ENCODE measurements at regions of chrX and their contacts with region 1.

Region 1: GRCh38 chrX:100768679-100769338 is 36.9 kb upstream of the SYTL4 start:
- DNase-seq: peak; percentile 34
- ATAC-seq: peak; percentile 77
- H3K4me3 ChIP-seq: no peak overlapping the region
- H3K27ac ChIP-seq: no peak overlapping the region
- H3K4me1 ChIP-seq: no peaks in the 10 kb centered on the region
- H3K27me3 ChIP-seq: no peaks in the 10 kb centered on the region
- CTCF ChIP-seq: peak; percentile 100; a peak in 5 of 6 replicates
- EP300 ChIP-seq: no peak
- POLR2A ChIP-seq: no peak
- RAD21 ChIP-seq: peak; percentile 98

Region 2: DNA sequence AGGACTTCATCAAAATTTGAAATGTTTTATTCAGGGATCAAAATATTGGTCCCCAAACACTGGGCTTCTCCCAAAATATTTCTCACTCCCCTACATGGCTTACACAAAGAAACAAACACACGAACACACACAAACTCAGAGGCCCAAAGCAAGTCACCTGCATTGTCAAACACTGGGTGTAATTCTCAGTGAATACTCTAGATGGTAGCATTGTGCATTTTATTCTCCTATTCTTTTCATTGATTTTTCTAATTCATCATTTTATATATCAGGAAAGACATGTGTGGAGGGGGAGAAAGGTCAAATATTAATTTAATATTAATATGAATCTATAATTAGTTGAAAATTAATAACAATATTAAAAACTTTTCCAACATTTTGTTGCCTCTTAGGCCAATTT is 256.3 kb before region 1 on chrX:
- CTCF ChIA-PET with region 1: interaction called, 15 read pairs
- POLR2A ChIA-PET with region 1: no interaction called
- RAD21 ChIA-PET with region 1: interaction called, 4 read pairs
- SMC1A ChIA-PET with region 1: interaction called, 3 read pairs
- in situ Hi-C with region 1: loop called (anchors 10 kb)
- intact Hi-C with region 1: loop called (anchors 1 kb)
- DNase-seq: no peak
- ATAC-seq: peak; percentile 59
- H3K4me3 ChIP-seq: no peak overlapping the region
- H3K27ac ChIP-seq: no peak overlapping the region
- H3K4me1 ChIP-seq: no peaks in the 10 kb centered on the region
- H3K27me3 ChIP-seq: no peaks in the 10 kb centered on the region
- CTCF ChIP-seq: peak; percentile 41 to 68 (median 53); a peak in 5 of 6 replicates
- EP300 ChIP-seq: no peak
- POLR2A ChIP-seq: no peak
- RAD21 ChIP-seq: peak; percentile 40

Region 3: GRCh38 chrX:100674705-100675104 is 94.1 kb before region 1 on chrX:
- CTCF ChIA-PET with region 1: interaction called, 86 read pairs
- POLR2A ChIA-PET with region 1: no interaction called
- RAD21 ChIA-PET with region 1: interaction called, 16 read pairs
- SMC1A ChIA-PET with region 1: interaction called, 11 read pairs
- in situ Hi-C with region 1: no loop called
- intact Hi-C with region 1: no loop called
- DNase-seq: no peak
- ATAC-seq: peak; percentile 34
- H3K4me3 ChIP-seq: no peak overlapping the region
- H3K27ac ChIP-seq: no peak overlapping the region
- H3K4me1 ChIP-seq: no peaks in the 10 kb centered on the region
- H3K27me3 ChIP-seq: no peaks in the 10 kb centered on the region
- CTCF ChIP-seq: no peak
- EP300 ChIP-seq: no peak
- POLR2A ChIP-seq: no peak
- RAD21 ChIP-seq: no peak

Region 4: DNA sequence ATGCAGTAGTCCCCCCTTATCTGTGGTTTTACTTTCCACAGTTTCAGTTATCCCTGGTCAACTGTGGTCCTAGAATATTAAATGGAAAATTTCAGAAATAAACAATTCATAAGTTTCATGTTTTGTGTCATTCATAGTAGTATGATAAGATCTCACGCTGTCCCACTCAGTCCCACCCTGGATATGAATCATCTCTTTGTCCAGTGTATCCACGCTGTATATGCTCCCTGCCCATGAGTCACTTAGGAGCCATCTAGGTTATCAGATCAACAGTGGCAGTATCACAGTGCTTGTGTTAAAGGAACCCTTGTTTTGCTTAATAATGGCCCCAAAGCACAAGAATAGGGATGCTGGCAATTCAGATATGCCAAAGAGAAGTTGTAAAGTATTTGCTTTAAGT is 20.7 kb before region 1 on chrX:
- CTCF ChIA-PET with region 1: interaction called, 19 read pairs
- POLR2A ChIA-PET with region 1: no interaction called
- RAD21 ChIA-PET with region 1: no interaction called
- SMC1A ChIA-PET with region 1: interaction called, 3 read pairs
- in situ Hi-C with region 1: no loop called
- intact Hi-C with region 1: no loop called
- DNase-seq: no peak
- ATAC-seq: no peak
- H3K4me3 ChIP-seq: no peak overlapping the region
- H3K27ac ChIP-seq: no peak overlapping the region
- H3K4me1 ChIP-seq: no peaks in the 10 kb centered on the region
- H3K27me3 ChIP-seq: no peaks in the 10 kb centered on the region
- CTCF ChIP-seq: no peak
- EP300 ChIP-seq: no peak
- POLR2A ChIP-seq: no peak
- RAD21 ChIP-seq: no peak

Region 5: GRCh38 chrX:100911726-100912125 is 142.9 kb after region 1 on chrX:
- CTCF ChIA-PET with region 1: no interaction called
- POLR2A ChIA-PET with region 1: no interaction called
- RAD21 ChIA-PET with region 1: no interaction called
- SMC1A ChIA-PET with region 1: no interaction called
- in situ Hi-C with region 1: no loop called
- intact Hi-C with region 1: no loop called
- DNase-seq: no peak
- ATAC-seq: no peak
- H3K4me3 ChIP-seq: no peak overlapping the region
- H3K27ac ChIP-seq: no peak overlapping the region
- H3K4me1 ChIP-seq: no peaks in the 10 kb centered on the region
- H3K27me3 ChIP-seq: no peaks in the 10 kb centered on the region
- CTCF ChIP-seq: no peak
- EP300 ChIP-seq: no peak
- POLR2A ChIP-seq: no peak
- RAD21 ChIP-seq: no peak

Measured in GM12878 (cell line).